ENCODE measurements at regions of chr2 and their contacts with region 1.

Region 1: GRCh38 chr2:186503848-186504606 is 18.0 kb downstream of the ZC3H15 start:
- DNase-seq: no peak
- ATAC-seq: peak; percentile 67
- H3K4me3 ChIP-seq: no peak overlapping the region
- H3K27ac ChIP-seq: no peak overlapping the region
- H3K4me1 ChIP-seq: no peaks in the 10 kb centered on the region
- H3K27me3 ChIP-seq: no peaks in the 10 kb centered on the region
- CTCF ChIP-seq: peak in 2 of 3 experiments; percentile 18 to 45; a peak in 3 of 6 replicates
- EP300 ChIP-seq: no peak
- POLR2A ChIP-seq: no peak
- RAD21 ChIP-seq: peak; percentile 48

Region 2: DNA sequence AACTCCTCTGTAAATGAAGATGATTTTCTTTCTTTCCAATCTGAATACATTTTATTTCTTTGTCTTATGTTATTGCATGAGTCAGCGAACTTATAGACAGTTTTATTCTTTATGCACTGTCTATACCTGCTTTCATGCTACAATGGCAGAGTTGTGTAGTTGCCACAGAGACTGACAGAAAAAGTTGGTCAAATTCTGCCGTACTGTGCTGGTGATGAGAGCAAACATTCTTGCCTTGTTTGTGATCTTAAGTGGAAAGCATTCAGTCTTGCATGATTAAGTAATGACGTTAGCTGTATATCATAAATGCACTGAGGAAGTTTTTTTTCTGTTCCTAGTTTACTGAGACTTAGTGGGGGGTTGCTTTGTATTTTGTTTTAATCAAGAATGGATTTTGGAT is 14.9 kb after region 1 on chr2:
- CTCF ChIA-PET with region 1: interaction called, 16 read pairs
- POLR2A ChIA-PET with region 1: no interaction called
- RAD21 ChIA-PET with region 1: interaction called, 5 read pairs
- SMC1A ChIA-PET with region 1: interaction called, 4 read pairs
- in situ Hi-C with region 1: no loop called
- intact Hi-C with region 1: no loop called
- DNase-seq: no peak
- ATAC-seq: no peak
- H3K4me3 ChIP-seq: no peak overlapping the region
- H3K27ac ChIP-seq: no peak overlapping the region
- H3K4me1 ChIP-seq: no peaks in the 10 kb centered on the region
- H3K27me3 ChIP-seq: no peaks in the 10 kb centered on the region
- CTCF ChIP-seq: no peak
- EP300 ChIP-seq: no peak
- POLR2A ChIP-seq: no peak
- RAD21 ChIP-seq: no peak

Region 3: GRCh38 chr2:186634701-186635100 is 130.7 kb after region 1 on chr2:
- CTCF ChIA-PET with region 1: interaction called, 244 read pairs
- POLR2A ChIA-PET with region 1: interaction called, 3 read pairs
- RAD21 ChIA-PET with region 1: interaction called, 94 read pairs
- SMC1A ChIA-PET with region 1: interaction called, 115 read pairs
- in situ Hi-C with region 1: no loop called
- intact Hi-C with region 1: no loop called
- DNase-seq: no peak
- ATAC-seq: no peak
- H3K4me3 ChIP-seq: no peak overlapping the region
- H3K27ac ChIP-seq: no peak overlapping the region
- H3K4me1 ChIP-seq: peaks cover 10% of the 10 kb centered on the region
- H3K27me3 ChIP-seq: no peaks in the 10 kb centered on the region
- CTCF ChIP-seq: no peak
- EP300 ChIP-seq: no peak
- POLR2A ChIP-seq: no peak
- RAD21 ChIP-seq: no peak

Region 4: GRCh38 chr2:186780701-186781348 is 276.8 kb after region 1 on chr2:
- CTCF ChIA-PET with region 1: interaction called, 5 read pairs
- POLR2A ChIA-PET with region 1: no interaction called
- RAD21 ChIA-PET with region 1: interaction called, 4 read pairs
- SMC1A ChIA-PET with region 1: interaction called, 5 read pairs
- in situ Hi-C with region 1: no loop called
- intact Hi-C with region 1: loop called (anchors 2 kb)
- DNase-seq: no peak
- ATAC-seq: peak; percentile 91
- H3K4me3 ChIP-seq: no peak overlapping the region
- H3K27ac ChIP-seq: no peak overlapping the region
- H3K4me1 ChIP-seq: no peaks in the 10 kb centered on the region
- H3K27me3 ChIP-seq: no peaks in the 10 kb centered on the region
- CTCF ChIP-seq: peak; percentile 21 to 45 (median 28); a peak in 4 of 6 replicates
- EP300 ChIP-seq: no peak
- POLR2A ChIP-seq: no peak
- RAD21 ChIP-seq: peak; percentile 71

Measured in GM12878 (cell line).